ENCODE measurements at regions of chr2 and their contacts with region 1.

Region 1: GRCh38 chr2:28566521-28567041 is 70.7 kb downstream of the PLB1 start:
- DNase-seq: peak; percentile 87 to 92
- ATAC-seq: peak; percentile 97 to 98
- H3K4me3 ChIP-seq: peak overlapping the region; percentile 46
- H3K27ac ChIP-seq: peak overlapping the region; percentile 77 to 89
- H3K4me1 ChIP-seq: peaks cover 22% of the 10 kb centered on the region
- CTCF ChIP-seq: peak; percentile 100
- EP300 ChIP-seq: no peak
- POLR2A ChIP-seq: 0 out of 2 replicates have a peak, but pooled peaks have one; percentile 19
- RAD21 ChIP-seq: peak; percentile 93 to 100

Region 2: DNA sequence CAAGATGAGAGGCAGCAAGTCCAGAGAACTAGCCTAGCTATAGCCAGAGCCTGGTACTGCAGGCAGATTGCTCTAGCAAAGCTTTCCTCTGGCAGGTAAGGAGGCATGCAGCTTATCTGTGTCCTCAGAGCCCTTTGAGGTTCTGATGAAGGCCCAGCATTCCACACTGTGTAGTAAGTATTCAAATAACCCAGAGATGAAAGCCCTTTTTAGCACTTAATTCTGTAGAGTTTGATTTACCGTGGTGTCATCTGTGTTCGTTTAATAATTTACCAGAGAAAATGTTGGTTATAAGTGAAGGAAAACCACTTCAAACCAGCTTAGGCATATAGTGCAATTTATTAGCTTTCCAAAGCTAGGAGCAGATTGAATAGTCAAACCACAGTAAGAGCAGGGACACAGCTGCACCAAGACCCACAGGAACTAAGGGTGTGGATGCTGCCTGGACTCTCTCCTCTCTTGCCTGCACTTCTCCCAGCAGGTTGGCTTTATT is 449.4 kb before region 1 on chr2:
- CTCF ChIA-PET with region 1: no interaction called
- POLR2A ChIA-PET with region 1: no interaction called
- DNase-seq: peak in 1 of 2 experiments; percentile 26
- ATAC-seq: peak; percentile 70 to 77; a peak in 5 of 6 replicates
- H3K4me3 ChIP-seq: no peak overlapping the region
- H3K27ac ChIP-seq: peak overlapping the region; percentile 4 to 71; a peak in 4 of 6 replicates
- H3K4me1 ChIP-seq: peaks cover 18% of the 10 kb centered on the region
- CTCF ChIP-seq: no peak
- EP300 ChIP-seq: peak in 1 of 2 experiments; percentile 15; a peak in 1 of 5 replicates
- POLR2A ChIP-seq: no peak
- RAD21 ChIP-seq: no peak

Region 3: DNA sequence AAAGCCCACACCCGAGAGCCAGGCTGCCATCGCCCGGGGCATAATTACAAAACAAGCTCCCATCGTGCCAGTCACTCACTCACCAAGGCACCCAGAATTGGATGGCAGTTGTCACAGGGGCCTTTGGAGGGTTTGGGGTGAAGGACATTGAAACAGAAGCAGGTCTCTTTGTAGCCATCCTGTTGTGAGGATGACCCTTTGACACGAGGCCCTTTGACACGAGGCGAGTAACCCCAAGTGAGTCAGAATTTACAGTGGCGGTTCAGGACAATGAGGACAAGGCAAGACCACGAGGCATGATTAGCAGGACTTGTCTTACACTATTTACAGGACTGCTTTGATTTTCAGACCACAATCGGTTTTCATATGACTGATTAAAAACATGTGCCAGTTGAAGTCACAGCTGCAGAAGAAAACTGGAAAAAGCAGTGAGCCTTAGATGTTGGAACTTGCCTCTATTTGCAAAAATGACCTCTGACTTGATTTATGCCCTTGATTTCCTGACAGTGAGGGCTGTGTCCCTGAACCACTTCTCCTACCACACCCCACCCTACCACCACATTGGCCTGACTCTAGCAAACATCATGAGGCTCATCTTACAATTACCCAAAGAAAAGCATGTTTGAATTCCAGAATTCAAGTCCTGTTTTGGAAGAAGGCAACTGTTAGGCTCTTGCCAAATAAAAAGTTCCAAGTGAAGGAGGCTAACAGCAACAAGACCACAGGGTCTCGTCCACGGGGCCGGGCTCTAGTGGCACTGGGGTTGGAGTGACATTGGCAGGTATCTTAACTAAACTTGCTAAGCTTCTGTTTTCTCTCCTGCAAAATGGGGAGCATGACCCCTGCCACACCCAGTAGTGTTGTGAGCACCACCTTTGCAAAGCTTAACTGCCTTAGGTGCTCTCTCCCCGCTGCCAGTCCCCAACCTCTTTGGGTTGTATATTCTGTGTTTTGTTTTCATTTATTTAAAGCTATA is 238.3 kb before region 1 on chr2:
- CTCF ChIA-PET with region 1: no interaction called
- POLR2A ChIA-PET with region 1: no interaction called
- DNase-seq: no peak
- ATAC-seq: no peak
- H3K4me3 ChIP-seq: no peak overlapping the region
- H3K27ac ChIP-seq: peak overlapping the region in 1 of 2 experiments; percentile 6; a peak in 1 of 6 replicates
- H3K4me1 ChIP-seq: peaks cover 11% of the 10 kb centered on the region; the same call in 2 of the 3 replicates
- CTCF ChIP-seq: no peak
- EP300 ChIP-seq: no peak
- POLR2A ChIP-seq: no peak
- RAD21 ChIP-seq: no peak

Region 4: DNA sequence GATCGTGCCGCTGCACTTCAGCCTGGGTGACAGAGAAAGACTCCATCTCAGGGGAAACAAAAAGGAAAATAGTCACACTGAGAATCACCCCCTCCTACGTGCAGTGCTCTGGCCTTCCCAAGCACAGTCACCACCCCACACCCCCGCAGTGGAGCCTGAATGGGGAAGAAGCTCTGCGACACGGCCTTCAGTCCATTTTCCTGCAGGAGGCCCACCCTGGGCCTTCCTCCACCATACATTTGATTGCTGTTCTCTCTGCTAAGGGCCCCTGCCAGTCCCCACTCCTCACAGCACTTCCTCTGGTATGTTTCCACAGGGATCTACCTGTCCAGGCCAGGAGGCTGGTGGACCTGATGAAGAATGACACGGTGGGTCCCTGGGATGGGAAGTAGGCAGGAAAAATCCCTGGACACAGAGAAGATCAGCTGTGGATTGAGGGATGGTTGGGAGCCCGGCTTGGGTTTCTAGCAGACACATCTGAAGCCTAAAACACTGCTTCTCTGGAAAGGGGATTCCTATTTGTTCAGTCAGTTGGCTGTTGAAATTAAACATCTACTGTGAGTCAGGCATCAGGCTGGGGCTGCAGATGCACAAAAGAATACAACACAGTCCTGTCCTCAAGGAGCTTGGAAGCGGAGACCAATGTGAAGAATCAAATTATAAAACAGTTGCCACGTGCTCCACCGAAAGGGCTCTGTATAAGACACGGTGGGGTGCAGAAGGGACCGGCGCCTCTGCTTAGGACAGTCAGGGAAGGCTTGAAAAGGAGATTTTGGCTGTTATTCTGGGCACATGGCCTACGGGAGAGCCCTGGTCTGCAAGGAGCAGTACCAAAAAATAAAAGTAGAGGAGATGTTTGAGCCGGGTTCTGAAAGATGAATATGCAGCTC is 11.5 kb after region 1 on chr2:
- CTCF ChIA-PET with region 1: interaction called, 92 read pairs
- POLR2A ChIA-PET with region 1: interaction called, 4 read pairs
- DNase-seq: no peak
- ATAC-seq: no peak
- H3K4me3 ChIP-seq: no peak overlapping the region
- H3K27ac ChIP-seq: 0 out of 6 replicates have a peak overlapping the region, but pooled peaks have one; percentile 2 to 29
- H3K4me1 ChIP-seq: peaks cover 8% of the 10 kb centered on the region
- CTCF ChIP-seq: no peak
- EP300 ChIP-seq: no peak
- POLR2A ChIP-seq: no peak
- RAD21 ChIP-seq: no peak

Region 5: DNA sequence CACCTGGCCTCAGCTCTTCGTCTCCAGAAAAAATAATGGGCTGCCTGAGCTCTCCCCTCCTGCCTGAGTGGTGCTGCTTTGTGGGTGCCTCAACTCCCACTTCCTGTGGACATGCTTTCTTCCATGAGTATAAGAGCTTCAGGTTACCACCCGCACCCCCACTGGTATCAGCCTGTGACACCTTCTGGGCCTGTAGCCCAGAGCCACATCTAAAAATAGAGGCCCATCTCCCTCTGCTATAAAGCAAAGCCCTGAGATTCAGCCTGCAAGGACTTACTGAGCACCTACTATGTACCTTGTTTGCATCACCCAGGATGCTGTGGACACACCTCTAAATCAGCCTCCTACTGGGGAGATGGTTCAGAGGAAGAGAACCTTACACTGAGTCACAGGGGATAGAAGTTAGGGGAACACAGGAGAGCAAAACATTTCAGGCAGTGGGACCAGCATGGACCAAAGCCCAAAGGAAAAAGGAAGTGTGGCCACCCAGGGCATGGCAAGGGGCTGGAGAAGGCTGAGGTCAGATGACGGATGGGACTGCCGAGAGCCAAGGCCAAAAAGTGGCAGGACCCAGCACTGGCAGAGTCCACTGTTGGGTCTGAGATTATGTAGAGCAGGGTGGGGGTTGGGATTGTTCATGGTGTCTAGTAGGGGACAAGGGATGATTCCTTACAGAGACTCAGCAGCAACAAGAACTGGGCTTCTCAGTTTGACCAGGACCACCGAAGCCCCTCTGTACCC is 61.3 kb after region 1 on chr2:
- CTCF ChIA-PET with region 1: interaction called, 17 read pairs
- POLR2A ChIA-PET with region 1: no interaction called
- DNase-seq: no peak
- ATAC-seq: no peak
- H3K4me3 ChIP-seq: no peak overlapping the region
- H3K27ac ChIP-seq: no peak overlapping the region
- H3K4me1 ChIP-seq: no peaks in the 10 kb centered on the region
- CTCF ChIP-seq: no peak
- EP300 ChIP-seq: no peak
- POLR2A ChIP-seq: no peak
- RAD21 ChIP-seq: no peak

Region 6: GRCh38 chr2:28695245-28695647 is 128.7 kb after region 1 on chr2:
- CTCF ChIA-PET with region 1: interaction called, 10 read pairs
- POLR2A ChIA-PET with region 1: no interaction called
- DNase-seq: no peak
- ATAC-seq: no peak
- H3K4me3 ChIP-seq: no peak overlapping the region
- H3K27ac ChIP-seq: peak overlapping the region; percentile 18 to 51; a peak in 3 of 6 replicates
- H3K4me1 ChIP-seq: peaks cover 14% of the 10 kb centered on the region
- CTCF ChIP-seq: no peak
- EP300 ChIP-seq: no peak
- POLR2A ChIP-seq: no peak
- RAD21 ChIP-seq: no peak

Region 7: DNA sequence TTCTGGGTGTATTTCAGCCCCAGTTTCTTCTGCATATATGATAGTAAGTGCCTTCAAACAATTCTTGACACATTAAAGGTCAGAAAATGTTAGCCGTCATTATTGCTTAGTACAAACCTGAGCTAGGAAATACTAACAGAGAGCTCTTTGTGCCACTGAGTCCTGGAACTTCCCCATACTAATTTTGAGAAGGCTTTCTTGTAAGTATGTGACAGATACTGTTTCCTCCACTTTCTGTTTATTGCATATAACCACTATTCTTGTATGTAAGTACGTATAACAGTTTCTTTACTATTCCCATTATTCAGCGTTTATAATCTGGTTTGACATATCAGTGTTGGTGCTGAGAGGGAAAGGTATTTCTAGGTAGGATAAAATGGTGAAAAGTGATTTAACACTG is 194.8 kb after region 1 on chr2:
- CTCF ChIA-PET with region 1: interaction called, 89 read pairs
- POLR2A ChIA-PET with region 1: no interaction called
- DNase-seq: no peak
- ATAC-seq: no peak
- H3K4me3 ChIP-seq: no peak overlapping the region
- H3K27ac ChIP-seq: no peak overlapping the region
- H3K4me1 ChIP-seq: peaks cover 32% of the 10 kb centered on the region
- CTCF ChIP-seq: no peak
- EP300 ChIP-seq: no peak
- POLR2A ChIP-seq: no peak
- RAD21 ChIP-seq: no peak

Region 8: DNA sequence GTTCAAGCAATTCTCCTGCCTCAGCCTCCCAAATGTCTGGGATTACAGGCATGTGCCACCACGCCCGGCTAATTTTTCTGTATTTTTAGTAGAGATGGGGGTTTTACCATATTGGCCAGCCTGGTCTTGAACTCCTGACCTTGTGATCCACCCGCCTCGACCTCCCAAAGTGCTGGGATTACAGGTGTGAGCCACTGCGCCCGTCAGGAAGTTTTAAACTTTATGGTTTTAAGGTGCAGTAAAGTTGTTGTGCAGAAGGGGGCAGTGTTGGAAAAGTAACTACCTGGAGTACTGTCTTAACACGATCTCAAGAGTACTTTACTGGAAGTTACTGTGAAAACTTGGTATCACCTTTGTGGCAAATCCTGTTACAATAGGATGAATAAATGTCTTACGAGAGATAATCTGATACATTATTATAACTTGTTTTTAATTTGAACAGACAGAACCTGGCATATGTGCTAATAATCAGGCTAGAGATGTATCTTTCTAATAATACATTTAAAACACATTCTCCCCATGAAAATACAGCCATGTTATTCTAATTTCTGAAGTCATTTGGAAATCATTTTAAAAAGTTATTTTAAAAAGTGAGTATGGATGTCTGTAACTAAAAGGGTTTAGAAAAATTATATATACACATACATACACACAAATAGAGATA is 254.8 kb after region 1 on chr2:
- CTCF ChIA-PET with region 1: interaction called, 16 read pairs
- POLR2A ChIA-PET with region 1: no interaction called
- DNase-seq: peak; percentile 50 to 88
- ATAC-seq: peak; percentile 90 to 92
- H3K4me3 ChIP-seq: no peak overlapping the region
- H3K27ac ChIP-seq: no peak overlapping the region
- H3K4me1 ChIP-seq: peaks cover 6% of the 10 kb centered on the region; the same call in 2 of the 3 replicates
- CTCF ChIP-seq: peak; percentile 86
- EP300 ChIP-seq: no peak
- POLR2A ChIP-seq: no peak
- RAD21 ChIP-seq: peak; percentile 84 to 91